B cell (primary cell): ENCODE measurements at regions of chr5 and their contacts with region 1.

Region 1: DNA sequence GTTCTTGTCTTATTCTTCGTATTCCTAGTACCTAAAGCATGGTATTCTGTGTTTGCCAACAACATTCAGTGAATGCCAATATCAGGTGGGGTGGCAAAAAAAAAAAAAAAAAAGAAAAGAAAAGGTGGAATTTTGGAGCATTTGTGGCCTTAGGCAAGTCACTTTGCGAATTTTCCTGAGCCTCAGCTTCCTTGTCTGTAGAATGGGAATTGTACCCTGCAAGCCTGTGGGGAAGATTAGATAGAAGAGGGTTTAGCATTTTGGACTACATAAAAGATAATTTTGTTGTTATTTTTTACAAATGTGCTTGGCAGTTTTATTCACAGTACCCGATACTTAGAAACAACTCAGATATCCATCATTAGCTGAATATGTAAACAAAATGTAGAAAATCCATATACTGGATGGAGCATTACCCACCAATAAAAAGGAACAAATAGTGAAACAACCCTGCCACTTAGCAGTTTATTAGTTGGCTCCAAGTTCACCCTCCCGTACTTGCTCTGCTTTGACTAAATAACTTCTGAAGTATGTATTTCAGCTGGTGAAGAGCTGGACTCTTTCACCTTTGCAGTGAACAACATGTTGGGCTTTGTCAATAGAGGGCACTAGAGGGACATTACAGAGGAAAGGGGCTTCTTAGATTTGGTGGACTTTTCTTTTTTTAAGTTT is 13.6 kb downstream of the UBE2D2 start:
- DNase-seq: peak; percentile 63
- ATAC-seq: peak; percentile 67
- H3K4me3 ChIP-seq: no peak overlapping the region
- H3K4me3 Mint-ChIP-seq: peak overlapping the region; percentile 2
- H3K27ac ChIP-seq: peak overlapping the region in 1 of 2 donors; percentile 66
- H3K27ac Mint-ChIP-seq: peak overlapping the region; percentile 5
- H3K4me1 ChIP-seq: peaks cover 71 to 76% of the 10 kb centered on the region in 2 donors
- H3K4me1 Mint-ChIP-seq: peaks cover 74% of the 10 kb centered on the region
- H3K27me3 ChIP-seq: no peaks in the 10 kb centered on the region
- H3K27me3 Mint-ChIP-seq: no peaks in the 10 kb centered on the region
- CTCF ChIP-seq: peak; percentile 79

Region 2: GRCh38 chr5:139543423-139543991 is 31.3 kb before region 1 on chr5:
- CTCF ChIA-PET with region 1: interaction called, 17 read pairs
- POLR2A ChIA-PET with region 1: no interaction called
- intact Hi-C with region 1: loop called (anchors 1 kb)
- DNase-seq: peak; percentile 85
- ATAC-seq: peak; percentile 99
- H3K4me3 ChIP-seq: peak overlapping the region in 4 of 5 experiments; percentile 20 to 61 (median 50)
- H3K4me3 Mint-ChIP-seq: peak overlapping the region; percentile 79
- H3K27ac ChIP-seq: peak overlapping the region; percentile 71 to 74
- H3K27ac Mint-ChIP-seq: peak overlapping the region; percentile 90
- H3K4me1 ChIP-seq: peaks cover 6 to 16% of the 10 kb centered on the region in 2 donors
- H3K4me1 Mint-ChIP-seq: peaks cover 16% of the 10 kb centered on the region
- H3K27me3 ChIP-seq: no peaks in the 10 kb centered on the region
- H3K27me3 Mint-ChIP-seq: no peaks in the 10 kb centered on the region
- CTCF ChIP-seq: peak; percentile 57

Region 3: DNA sequence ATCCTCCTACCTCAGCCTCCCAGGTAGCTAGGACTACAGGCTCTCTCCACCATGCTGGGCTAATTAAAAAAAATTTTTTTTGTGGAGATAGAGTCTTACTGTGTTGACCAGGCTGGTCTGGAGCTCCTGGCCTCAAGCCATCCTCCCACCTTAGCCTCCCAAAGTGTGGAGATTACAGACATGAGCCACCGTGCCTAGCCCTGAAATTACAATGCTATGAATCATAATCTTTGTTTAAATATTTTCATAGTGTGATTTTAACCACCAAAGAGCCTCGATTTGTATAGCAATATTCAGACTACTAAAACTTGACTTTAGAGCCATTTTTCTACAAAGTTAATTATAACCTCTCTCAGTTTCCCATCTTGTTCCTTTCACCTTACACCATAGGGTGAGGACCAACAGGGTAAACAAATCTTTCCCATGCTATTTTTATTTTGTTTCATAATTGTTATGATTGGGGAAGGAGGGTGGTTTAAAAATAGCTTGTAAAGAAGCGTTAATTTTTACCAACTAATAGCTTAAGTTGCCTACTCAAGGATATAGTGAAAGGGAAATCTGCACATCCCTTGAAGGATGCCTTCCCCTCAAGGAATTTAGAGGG is 19.0 kb after region 1 on chr5:
- CTCF ChIA-PET with region 1: interaction called, 9 read pairs
- POLR2A ChIA-PET with region 1: interaction called, 4 read pairs
- intact Hi-C with region 1: loop called (anchors 2 kb)
- DNase-seq: no peak
- ATAC-seq: no peak
- H3K4me3 ChIP-seq: no peak overlapping the region
- H3K4me3 Mint-ChIP-seq: no peak overlapping the region
- H3K27ac ChIP-seq: peak overlapping the region in 1 of 2 donors; percentile 59
- H3K27ac Mint-ChIP-seq: peak overlapping the region; percentile 37
- H3K4me1 ChIP-seq: peaks cover 40 to 56% of the 10 kb centered on the region in 2 donors
- H3K4me1 Mint-ChIP-seq: peaks cover 56% of the 10 kb centered on the region
- H3K27me3 ChIP-seq: no peaks in the 10 kb centered on the region
- H3K27me3 Mint-ChIP-seq: no peaks in the 10 kb centered on the region
- CTCF ChIP-seq: no peak

Region 4: DNA sequence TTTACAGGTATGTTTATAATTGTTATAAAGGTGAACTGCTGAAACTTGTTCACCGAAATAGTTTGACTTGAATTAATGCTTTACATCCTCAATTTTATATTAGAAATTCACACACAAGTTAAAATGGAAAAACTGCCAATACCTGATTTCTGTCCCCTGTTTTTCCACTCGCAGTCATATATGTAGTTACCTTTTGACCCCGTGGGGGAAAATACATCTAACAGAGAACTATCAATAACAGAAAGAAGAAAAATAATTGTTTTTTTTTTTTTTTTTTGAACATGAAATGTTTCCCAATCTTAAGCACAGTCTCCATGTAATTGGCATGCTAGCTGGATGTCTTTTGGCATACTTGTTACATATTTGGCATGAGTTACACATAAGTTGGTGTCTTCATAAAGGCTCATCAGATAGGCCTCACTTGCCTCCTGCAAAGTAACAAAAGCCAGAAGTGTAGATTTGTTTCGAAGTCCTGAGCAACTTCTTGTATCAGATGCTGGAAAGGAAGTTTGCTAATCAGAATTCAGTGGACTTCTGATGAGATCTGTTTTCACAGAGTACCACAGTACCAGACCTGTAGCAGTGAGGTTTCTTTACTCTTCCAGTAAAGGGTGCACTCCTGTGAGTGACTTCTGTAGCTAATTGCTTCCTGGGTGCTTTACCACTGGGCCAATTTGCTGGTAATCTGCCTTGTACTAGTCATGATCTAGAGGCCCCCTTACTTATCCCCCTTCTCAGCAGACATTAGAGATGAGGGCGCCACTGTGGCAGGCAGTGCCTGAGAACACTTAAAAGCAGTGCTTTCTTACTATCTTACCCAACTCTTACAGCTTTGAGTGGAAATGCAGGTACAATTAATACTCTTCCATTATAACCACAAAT is 37.2 kb after region 1 on chr5:
- CTCF ChIA-PET with region 1: interaction called, 3 read pairs
- POLR2A ChIA-PET with region 1: no interaction called
- intact Hi-C with region 1: loop called (anchors 5 kb)
- DNase-seq: no peak
- ATAC-seq: peak; percentile 39
- H3K4me3 ChIP-seq: no peak overlapping the region
- H3K4me3 Mint-ChIP-seq: no peak overlapping the region
- H3K27ac ChIP-seq: peak overlapping the region in 1 of 2 donors; percentile 73
- H3K27ac Mint-ChIP-seq: peak overlapping the region; percentile 1
- H3K4me1 ChIP-seq: peaks cover 11 to 17% of the 10 kb centered on the region in 2 donors
- H3K4me1 Mint-ChIP-seq: peaks cover 29% of the 10 kb centered on the region
- H3K27me3 ChIP-seq: no peaks in the 10 kb centered on the region
- H3K27me3 Mint-ChIP-seq: no peaks in the 10 kb centered on the region
- CTCF ChIP-seq: no peak